ENCODE measurements at regions of chr11 and their contacts with region 1.

Region 1: GRCh38 chr11:108647701-108648527 is 17.0 kb upstream of the DDX10 start:
- DNase-seq: peak in 1 of 2 donors; percentile 71
- ATAC-seq: peak; percentile 86
- H3K4me3 ChIP-seq: no peak overlapping the region
- H3K27ac ChIP-seq: no peak overlapping the region
- H3K4me1 ChIP-seq: peaks cover 0 to 3% of the 10 kb centered on the region in 2 donors
- H3K27me3 ChIP-seq: no peaks in the 10 kb centered on the region

Region 2: GRCh38 chr11:108593214-108593922 is 54.5 kb before region 1 on chr11 and contains the start of gene EXPH5:
- intact Hi-C with region 1: loop called in 1 of 2 experiments (anchors 5 kb)
- DNase-seq: peak; percentile 85 to 94
- ATAC-seq: peak; percentile 93
- H3K4me3 ChIP-seq: peak within 1 kb of the TSS; percentile 72 to 79
- H3K27ac ChIP-seq: no peak within 1 kb of the TSS
- H3K4me1 ChIP-seq: no peaks in the 10 kb centered on the region
- H3K27me3 ChIP-seq: no peaks in the 10 kb centered on the region
- total RNA-seq, gene EXPH5: 1.8 to 4.5 TPM

Region 3: GRCh38 chr11:108697872-108698473 is 50.1 kb after region 1 on chr11:
- intact Hi-C with region 1: no loop called
- DNase-seq: peak in 1 of 2 donors; percentile 55
- ATAC-seq: peak; percentile 82
- H3K4me3 ChIP-seq: no peak overlapping the region
- H3K27ac ChIP-seq: no peak overlapping the region
- H3K4me1 ChIP-seq: no peaks in the 10 kb centered on the region
- H3K27me3 ChIP-seq: no peaks in the 10 kb centered on the region

Region 4: GRCh38 chr11:108853864-108854263 is 205.9 kb after region 1 on chr11:
- intact Hi-C with region 1: no loop called
- DNase-seq: no peak
- ATAC-seq: peak; percentile 42
- H3K4me3 ChIP-seq: peak overlapping the region in 1 of 2 donors; percentile 26
- H3K27ac ChIP-seq: peak overlapping the region; percentile 11 to 76
- H3K4me1 ChIP-seq: peaks cover 0 to 9% of the 10 kb centered on the region in 2 donors
- H3K27me3 ChIP-seq: no peaks in the 10 kb centered on the region